Heart left ventricle (tissue), 16 donors: ENCODE measurements at regions of chr1 and their contacts with region 1.

Region 1: GRCh38 chr1:91846007-91846617 is 39.8 kb downstream of the TGFBR3 start:
- DNase-seq: peak in 4 of 5 donors; percentile 58 to 76 (median 68)
- ATAC-seq: peak; percentile 69 to 82 (median 74)
- H3K4me3 ChIP-seq: peak overlapping the region in 1 of 12 donors; percentile 7
- H3K27ac ChIP-seq: peak overlapping the region; percentile 29 to 81 (median 68)
- H3K4me1 ChIP-seq: peaks cover 4 to 45% (median 29%) of the 10 kb centered on the region in 12 donors
- H3K27me3 ChIP-seq: no peaks in the 10 kb centered on the region
- CTCF ChIP-seq: no peak
- POLR2A ChIP-seq: no peak

Region 2: DNA sequence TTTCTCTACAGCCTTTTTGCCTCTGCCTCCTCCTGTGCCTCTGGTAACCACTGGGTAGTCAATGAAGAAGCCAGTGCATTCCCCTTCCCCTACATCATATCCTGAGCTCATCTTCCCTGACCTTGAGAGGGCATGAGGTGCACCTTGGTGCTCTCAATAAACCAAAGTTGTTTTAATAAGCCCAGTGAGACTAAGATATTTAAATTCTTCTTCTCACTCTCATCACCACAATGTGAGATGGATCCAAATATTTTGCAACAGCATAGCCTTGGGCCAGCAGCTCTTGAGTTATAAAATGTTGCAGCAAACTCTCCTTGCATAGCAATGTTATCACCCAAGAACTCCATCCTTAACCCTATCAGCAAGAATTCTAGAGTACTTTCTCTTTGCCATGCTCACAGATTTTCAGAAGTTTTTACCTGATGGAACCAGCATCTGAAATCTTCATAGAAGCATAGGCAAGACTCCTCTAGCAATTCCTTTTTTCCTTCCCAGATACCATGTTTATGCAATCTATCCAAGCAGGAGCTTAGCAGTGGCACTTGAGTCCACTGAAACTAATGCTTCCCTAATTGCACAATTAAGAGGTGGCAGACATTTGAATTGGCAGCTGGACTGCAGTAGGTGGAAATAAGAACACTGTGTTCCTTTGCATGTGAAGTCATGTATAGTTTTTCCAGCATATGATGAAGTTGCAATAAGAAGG is 308.7 kb before region 1 on chr1:
- intact Hi-C with region 1: no loop called
- DNase-seq: no peak
- ATAC-seq: peak in 2 of 4 donors; percentile 62 to 68
- H3K4me3 ChIP-seq: no peak overlapping the region
- H3K27ac ChIP-seq: peak overlapping the region in 3 of 12 donors; percentile 8 to 35 (median 20)
- H3K4me1 ChIP-seq: peaks cover 0 to 6% (median 0%) of the 10 kb centered on the region in 12 donors
- H3K27me3 ChIP-seq: no peaks in the 10 kb centered on the region
- CTCF ChIP-seq: no peak
- POLR2A ChIP-seq: no peak

Region 3: DNA sequence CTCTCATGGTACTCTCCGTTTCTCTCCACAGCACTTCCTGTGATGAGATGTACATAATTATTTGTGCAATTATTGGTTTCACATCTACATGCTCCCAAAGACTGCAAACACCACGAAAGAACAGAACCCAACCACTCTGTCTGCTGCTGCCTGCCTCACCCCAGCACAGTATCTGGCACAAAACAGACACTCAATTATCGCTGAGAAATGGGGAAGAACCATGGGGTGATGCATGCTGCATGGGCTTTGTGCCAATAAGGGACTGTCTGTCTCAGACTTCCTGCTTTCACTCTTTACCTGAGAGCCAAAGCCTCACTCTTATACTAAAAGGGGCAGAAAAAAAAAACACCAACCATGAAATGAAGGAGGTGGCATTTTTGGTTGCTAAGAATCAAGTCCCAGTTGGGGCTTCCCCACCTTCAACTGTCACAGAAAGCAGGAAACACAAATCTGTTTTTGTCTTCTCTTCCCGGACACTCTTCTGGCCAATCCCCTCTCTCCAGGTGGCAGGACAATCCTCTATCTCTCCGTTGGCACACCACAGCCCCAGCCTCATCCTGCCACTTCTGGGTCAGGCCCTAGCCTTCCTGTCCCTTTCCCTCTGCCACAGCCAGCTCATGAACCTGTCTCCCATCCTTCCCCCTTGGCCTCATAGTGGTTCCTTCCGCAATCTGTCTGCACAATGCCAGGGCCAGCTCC is 42.1 kb before region 1 on chr1:
- intact Hi-C with region 1: loop called in 1 of 10 experiments (anchors 5 kb)
- DNase-seq: no peak
- ATAC-seq: peak in 2 of 4 donors; percentile 21 to 25
- H3K4me3 ChIP-seq: peak overlapping the region in 1 of 12 donors; percentile 6
- H3K27ac ChIP-seq: peak overlapping the region in 4 of 12 donors; percentile 22 to 77 (median 54)
- H3K4me1 ChIP-seq: peaks cover 0 to 73% (median 41%) of the 10 kb centered on the region in 12 donors
- H3K27me3 ChIP-seq: no peaks in the 10 kb centered on the region
- CTCF ChIP-seq: no peak
- POLR2A ChIP-seq: no peak

Region 4: DNA sequence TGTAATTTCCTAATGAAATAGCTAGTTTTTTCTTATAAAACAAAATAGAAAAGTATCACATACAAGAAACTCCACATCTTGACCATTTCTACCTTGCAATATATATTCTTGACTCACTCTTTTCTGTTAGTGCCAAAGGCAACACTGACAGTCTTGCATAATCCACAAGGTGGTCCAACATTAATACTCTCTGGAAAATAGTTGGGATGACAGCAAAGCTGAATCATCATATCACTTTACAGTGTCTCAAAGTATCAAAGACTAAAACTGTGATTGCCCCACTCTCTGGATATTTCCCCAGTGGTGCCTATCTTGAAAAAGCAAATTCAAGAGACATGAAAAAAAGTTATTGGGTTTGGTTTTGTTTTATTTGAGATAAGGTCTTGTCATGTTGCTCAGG is 54.4 kb after region 1 on chr1:
- intact Hi-C with region 1: no loop called
- DNase-seq: no peak
- ATAC-seq: peak in 1 of 4 donors; percentile 49
- H3K4me3 ChIP-seq: no peak overlapping the region
- H3K27ac ChIP-seq: no peak overlapping the region
- H3K4me1 ChIP-seq: no peaks in the 10 kb centered on the region
- H3K27me3 ChIP-seq: no peaks in the 10 kb centered on the region
- CTCF ChIP-seq: no peak
- POLR2A ChIP-seq: no peak

Region 5: GRCh38 chr1:92051948-92052347 is 205.8 kb after region 1 on chr1:
- intact Hi-C with region 1: no loop called
- DNase-seq: no peak
- ATAC-seq: no peak
- H3K4me3 ChIP-seq: no peak overlapping the region
- H3K27ac ChIP-seq: no peak overlapping the region
- H3K4me1 ChIP-seq: no peaks in the 10 kb centered on the region
- H3K27me3 ChIP-seq: no peaks in the 10 kb centered on the region
- CTCF ChIP-seq: no peak
- POLR2A ChIP-seq: no peak